ENCODE measurements at regions of chrX and their contacts with region 1.

Region 1: DNA sequence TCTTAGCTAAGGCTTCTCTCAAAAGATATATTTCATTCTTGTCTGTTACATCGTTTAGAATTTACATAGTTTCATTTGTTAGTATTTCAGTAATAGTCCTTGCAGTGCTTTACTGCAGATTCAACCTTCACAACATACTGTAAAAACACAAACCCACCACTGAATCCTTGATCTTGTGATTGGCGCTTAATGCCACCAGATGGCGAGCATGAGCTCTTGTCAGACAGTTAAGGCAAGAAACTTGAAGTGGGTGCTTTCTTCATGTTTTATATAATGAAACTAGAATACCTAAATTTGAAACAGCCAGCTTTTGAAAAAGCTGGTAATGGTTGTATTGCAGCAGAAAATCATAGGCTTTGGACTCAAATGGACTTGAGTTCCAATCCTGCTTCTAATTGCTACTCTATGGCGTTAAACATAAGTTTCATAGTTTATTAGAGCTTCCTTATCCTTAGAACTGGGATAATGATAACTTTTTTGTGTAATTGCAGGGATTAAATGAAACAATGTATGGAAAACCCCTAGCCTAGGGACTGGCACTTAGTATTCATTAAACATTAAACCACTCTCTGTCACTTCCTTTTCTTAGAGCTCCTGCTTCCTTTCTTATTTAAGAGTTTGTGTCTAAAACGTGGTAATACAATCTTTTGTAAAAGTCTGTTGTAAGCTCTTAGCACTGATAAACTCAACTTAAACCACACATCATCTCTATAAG is 95.1 kb downstream of the USP9X start:
- DNase-seq: no peak
- ATAC-seq: peak; percentile 79
- H3K4me3 Mint-ChIP-seq: peak overlapping the region; percentile 58
- H3K27ac Mint-ChIP-seq: peak overlapping the region; percentile 83
- H3K4me1 Mint-ChIP-seq: peaks cover 52% of the 10 kb centered on the region
- H3K27me3 Mint-ChIP-seq: no peaks in the 10 kb centered on the region
- CTCF ChIP-seq: no peak

Region 2: GRCh38 chrX:41022579-41022978 is 157.8 kb before region 1 on chrX:
- CTCF ChIA-PET with region 1: no interaction called
- POLR2A ChIA-PET with region 1: no interaction called
- intact Hi-C with region 1: no loop called
- DNase-seq: no peak
- ATAC-seq: no peak
- H3K4me3 Mint-ChIP-seq: no peak overlapping the region
- H3K27ac Mint-ChIP-seq: no peak overlapping the region
- H3K4me1 Mint-ChIP-seq: no peaks in the 10 kb centered on the region
- H3K27me3 Mint-ChIP-seq: peaks cover 2% of the 10 kb centered on the region
- CTCF ChIP-seq: no peak

Region 3: GRCh38 chrX:41236629-41237028 is 56.3 kb after region 1 on chrX:
- CTCF ChIA-PET with region 1: no interaction called
- POLR2A ChIA-PET with region 1: no interaction called
- intact Hi-C with region 1: loop called (anchors 5 kb)
- DNase-seq: no peak
- ATAC-seq: peak; percentile 47
- H3K4me3 Mint-ChIP-seq: no peak overlapping the region
- H3K27ac Mint-ChIP-seq: no peak overlapping the region
- H3K4me1 Mint-ChIP-seq: peaks cover 43% of the 10 kb centered on the region
- H3K27me3 Mint-ChIP-seq: no peaks in the 10 kb centered on the region
- CTCF ChIP-seq: no peak

Region 4: DNA sequence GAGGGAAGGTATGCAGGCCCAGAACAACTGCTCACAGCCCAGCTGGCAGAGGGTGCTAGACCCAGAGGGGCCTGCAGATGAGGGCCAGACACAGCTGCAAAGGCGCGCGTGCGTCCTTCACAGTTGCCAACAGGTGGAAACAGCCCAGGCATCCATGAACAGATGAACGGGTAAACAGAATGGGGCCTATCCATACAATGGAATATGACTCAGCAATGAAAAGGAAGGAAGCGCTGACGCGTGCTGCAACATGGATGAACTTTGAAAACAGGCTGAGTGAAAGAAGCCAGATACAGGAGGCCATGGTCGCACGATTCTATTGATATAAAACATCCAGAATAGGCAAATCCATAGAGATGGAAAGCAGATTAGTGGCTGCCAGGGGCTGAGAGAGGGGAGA is 70.5 kb after region 1 on chrX:
- CTCF ChIA-PET with region 1: interaction called, 32 read pairs
- POLR2A ChIA-PET with region 1: interaction called, 5 read pairs
- intact Hi-C with region 1: loop called (anchors 1 kb)
- DNase-seq: no peak
- ATAC-seq: no peak
- H3K4me3 Mint-ChIP-seq: no peak overlapping the region
- H3K27ac Mint-ChIP-seq: no peak overlapping the region
- H3K4me1 Mint-ChIP-seq: peaks cover 7% of the 10 kb centered on the region
- H3K27me3 Mint-ChIP-seq: no peaks in the 10 kb centered on the region
- CTCF ChIP-seq: no peak

Region 5: GRCh38 chrX:41258226-41258625 is 77.9 kb after region 1 on chrX:
- CTCF ChIA-PET with region 1: interaction called, 32 read pairs
- POLR2A ChIA-PET with region 1: interaction called, 5 read pairs
- intact Hi-C with region 1: loop called (anchors 1 kb)
- DNase-seq: no peak
- ATAC-seq: no peak
- H3K4me3 Mint-ChIP-seq: no peak overlapping the region
- H3K27ac Mint-ChIP-seq: no peak overlapping the region
- H3K4me1 Mint-ChIP-seq: peaks cover 15% of the 10 kb centered on the region
- H3K27me3 Mint-ChIP-seq: no peaks in the 10 kb centered on the region
- CTCF ChIP-seq: no peak

Region 6: DNA sequence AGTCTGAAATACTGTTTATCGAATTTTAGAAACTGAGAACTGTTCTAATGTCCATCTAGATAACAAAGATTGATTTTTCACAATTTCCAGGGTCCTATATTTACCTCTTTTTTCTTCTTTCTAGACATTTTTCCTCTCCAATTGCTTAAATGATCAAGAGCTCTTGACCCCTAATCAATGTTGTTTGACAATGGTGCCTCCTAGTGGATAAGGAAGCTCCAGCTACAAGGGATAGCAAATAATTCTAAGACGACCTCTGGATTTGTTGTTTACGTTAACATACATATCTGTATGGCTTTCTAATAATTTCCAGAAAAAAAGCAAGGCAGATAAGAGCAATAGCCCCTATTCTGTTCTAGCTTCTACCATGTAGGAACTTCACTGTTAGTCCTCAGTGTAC is 579.5 kb after region 1 on chrX:
- CTCF ChIA-PET with region 1: interaction called, 10 read pairs
- POLR2A ChIA-PET with region 1: no interaction called
- intact Hi-C with region 1: loop called (anchors 5 kb)
- DNase-seq: no peak
- ATAC-seq: no peak
- H3K4me3 Mint-ChIP-seq: no peak overlapping the region
- H3K27ac Mint-ChIP-seq: no peak overlapping the region
- H3K4me1 Mint-ChIP-seq: peaks cover 1% of the 10 kb centered on the region
- H3K27me3 Mint-ChIP-seq: no peaks in the 10 kb centered on the region
- CTCF ChIP-seq: no peak

Measured in activated B cell treated with CpG ODN at 0.5 μM for 24 hours (primary cell).